Ovary (tissue), 10 donors: ENCODE measurements at regions of chr1 and their contacts with region 1.

Region 1: GRCh38 chr1:149886396-149887195 is 12.8 kb upstream of the BOLA1 start:
- DNase-seq: peak; percentile 85 to 92 (median 87)
- H3K4me3 ChIP-seq: peak overlapping the region; percentile 80
- H3K27ac ChIP-seq: peak overlapping the region; percentile 96 to 99
- H3K4me1 ChIP-seq: peaks cover 2% of the 10 kb centered on the region
- H3K27me3 ChIP-seq: no peaks in the 10 kb centered on the region
- CTCF ChIP-seq: peak in 2 of 3 donors; percentile 20 to 26
- EP300 ChIP-seq: peak; percentile 77
- POLR2A ChIP-seq: peak; percentile 99

Region 2: DNA sequence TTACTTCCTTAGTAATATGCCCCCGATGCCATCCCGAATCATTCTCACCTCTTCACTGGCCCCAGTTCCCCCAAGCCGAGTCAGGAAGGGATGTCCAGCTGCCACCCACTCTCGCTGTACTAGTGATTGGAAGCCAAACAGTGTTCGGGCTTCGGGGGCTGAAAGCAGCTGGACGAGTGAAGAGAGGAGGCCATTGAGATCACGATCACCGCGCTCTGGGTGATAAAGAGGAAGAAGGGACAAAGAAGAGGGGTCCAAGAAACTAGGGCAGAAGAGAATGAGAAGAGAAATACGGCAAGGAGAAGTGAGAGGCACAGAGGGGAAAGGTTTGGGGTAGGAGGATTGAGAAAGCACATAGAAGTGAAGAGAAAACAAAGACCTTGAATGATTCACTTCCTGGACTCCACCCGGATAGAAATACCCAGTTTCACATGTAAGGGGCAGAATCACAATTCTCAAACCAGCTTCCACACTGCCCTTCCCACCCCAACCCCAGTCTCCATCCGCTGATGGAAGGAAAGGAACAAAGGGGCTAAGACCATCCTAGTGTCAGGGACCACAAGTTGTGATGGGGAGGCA is 44.7 kb after region 1 on chr1:
- intact Hi-C with region 1: loop called in 1 of 4 experiments (anchors 5 kb)
- DNase-seq: no peak
- H3K4me3 ChIP-seq: no peak overlapping the region
- H3K27ac ChIP-seq: no peak overlapping the region
- H3K4me1 ChIP-seq: peaks cover 16% of the 10 kb centered on the region
- H3K27me3 ChIP-seq: no peaks in the 10 kb centered on the region
- CTCF ChIP-seq: no peak
- EP300 ChIP-seq: no peak
- POLR2A ChIP-seq: no peak

Region 3: DNA sequence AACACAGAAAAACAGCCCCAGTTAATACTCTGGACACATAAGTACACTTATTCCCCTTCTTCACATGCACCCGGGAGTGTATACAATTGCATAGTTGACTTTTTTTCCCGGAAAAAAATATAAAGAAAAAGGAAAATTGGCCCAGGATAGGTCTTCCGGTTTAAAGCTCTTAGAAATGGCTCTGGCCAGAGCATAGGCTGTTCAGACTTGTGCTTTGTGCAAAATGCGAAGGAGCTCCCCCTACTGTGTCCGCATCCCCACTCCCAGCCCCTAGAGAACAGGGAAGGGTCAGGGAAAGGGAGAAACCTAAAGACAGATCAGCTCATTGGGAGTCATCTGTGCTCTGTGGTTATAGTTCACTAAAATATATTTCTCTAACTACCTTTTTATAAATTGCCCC is 55.6 kb after region 1 on chr1:
- intact Hi-C with region 1: no loop called
- DNase-seq: no peak
- H3K4me3 ChIP-seq: no peak overlapping the region
- H3K27ac ChIP-seq: peak overlapping the region in 1 of 2 donors; percentile 22
- H3K4me1 ChIP-seq: peaks cover 9% of the 10 kb centered on the region
- H3K27me3 ChIP-seq: no peaks in the 10 kb centered on the region
- CTCF ChIP-seq: no peak
- EP300 ChIP-seq: no peak
- POLR2A ChIP-seq: no peak